Caco-2 (cell line): ENCODE measurements at regions of chr11 and their contacts with region 1.

Region 1: DNA sequence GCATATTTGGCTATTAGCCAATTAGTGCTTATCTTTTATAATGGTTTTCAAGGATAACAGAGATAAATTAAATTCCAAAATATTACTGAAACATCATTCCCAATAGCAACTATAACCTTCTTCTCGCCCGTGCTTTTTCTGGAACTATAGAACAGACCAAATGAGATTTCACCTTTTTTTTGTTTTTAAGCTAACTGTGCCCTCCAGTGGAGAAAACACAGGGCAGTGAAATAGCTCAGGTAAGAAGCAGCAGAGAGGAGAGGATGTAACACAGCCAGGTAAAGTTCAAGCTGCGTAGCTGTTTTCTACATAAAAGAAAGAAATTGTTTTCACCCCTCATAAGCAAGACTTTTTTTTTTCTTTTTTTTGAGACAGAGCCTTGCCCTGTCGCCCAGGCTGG is 28.2 kb downstream of the HSD17B12 start:
- DNase-seq: peak in 1 of 2 experiments; percentile 16
- H3K4me3 ChIP-seq: no peak overlapping the region
- H3K4me3 Mint-ChIP-seq: no peak overlapping the region
- H3K27ac Mint-ChIP-seq: no peak overlapping the region
- H3K4me1 ChIP-seq: no peaks in the 10 kb centered on the region
- H3K4me1 Mint-ChIP-seq: no peaks in the 10 kb centered on the region
- H3K27me3 ChIP-seq: no peaks in the 10 kb centered on the region
- H3K27me3 Mint-ChIP-seq: no peaks in the 10 kb centered on the region
- CTCF ChIP-seq: peak in 1 of 2 experiments; percentile 35

Region 2: GRCh38 chr11:43579171-43579918 is 129.4 kb before region 1 on chr11:
- CTCF ChIA-PET with region 1: interaction called, 4 read pairs
- POLR2A ChIA-PET with region 1: no interaction called
- intact Hi-C with region 1: loop called (anchors 5 kb)
- DNase-seq: peak in 1 of 2 experiments; percentile 45
- H3K4me3 ChIP-seq: peak overlapping the region; percentile 60
- H3K4me3 Mint-ChIP-seq: peak overlapping the region; percentile 75
- H3K27ac Mint-ChIP-seq: no peak overlapping the region
- H3K4me1 ChIP-seq: no peaks in the 10 kb centered on the region; the same call in 1 of the 2 replicates
- H3K4me1 Mint-ChIP-seq: peaks cover 27% of the 10 kb centered on the region
- H3K27me3 ChIP-seq: peaks cover 6% of the 10 kb centered on the region
- H3K27me3 Mint-ChIP-seq: peaks cover 63% of the 10 kb centered on the region
- CTCF ChIP-seq: peak; percentile 40 to 65